Heart right ventricle (tissue), 16 donors: ENCODE measurements at regions of chr7 and their contacts with region 1.

Region 1: DNA sequence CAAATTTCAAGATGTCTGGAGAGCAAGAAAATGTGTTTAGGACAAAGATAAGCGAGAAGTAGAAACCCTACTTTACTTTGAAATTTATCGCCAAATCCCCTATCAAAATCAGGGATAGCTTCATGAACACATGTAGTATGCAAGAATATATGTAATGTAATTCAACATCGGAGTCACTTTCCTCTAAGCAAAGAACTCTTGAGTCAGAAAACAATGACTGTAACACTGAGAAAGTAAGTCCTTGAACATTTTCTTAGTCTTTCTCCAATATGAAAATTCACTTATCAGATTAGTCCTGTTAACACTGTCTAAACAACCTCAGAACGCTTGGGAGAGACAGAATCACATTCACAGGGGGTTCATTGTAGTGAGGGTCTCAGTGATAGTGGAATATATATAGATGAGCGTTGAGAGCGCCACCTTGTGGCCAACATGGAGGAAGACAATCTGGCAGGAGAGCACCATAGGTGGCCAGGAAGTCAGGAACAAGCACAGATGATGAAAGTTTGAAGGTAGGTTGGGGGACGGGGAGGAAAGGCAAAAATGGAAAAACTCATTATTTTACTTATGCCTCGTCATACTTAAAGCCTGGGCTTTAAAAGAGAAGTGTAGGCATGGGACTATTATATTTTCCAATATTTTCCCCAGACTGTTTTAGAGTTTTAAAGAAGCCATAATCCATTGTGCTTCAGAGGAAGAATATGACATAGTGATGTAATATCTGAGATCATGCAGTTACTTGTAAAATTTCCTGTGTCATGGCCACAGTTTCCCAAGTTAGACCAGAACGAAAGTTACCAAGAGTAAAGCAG is 115.5 kb upstream of the GNAI1 start:
- DNase-seq: peak in 1 of 2 donors; percentile 5
- ATAC-seq: peak in 4 of 8 donors; percentile 50 to 60 (median 56)
- H3K4me3 ChIP-seq: no peak overlapping the region
- H3K27ac ChIP-seq: no peak overlapping the region
- H3K4me1 ChIP-seq: no peaks in the 10 kb centered on the region
- H3K27me3 ChIP-seq: peaks cover 0 to 8% (median 0%) of the 10 kb centered on the region in 7 donors
- CTCF ChIP-seq: peak; percentile 66 to 85 (median 79)

Region 2: DNA sequence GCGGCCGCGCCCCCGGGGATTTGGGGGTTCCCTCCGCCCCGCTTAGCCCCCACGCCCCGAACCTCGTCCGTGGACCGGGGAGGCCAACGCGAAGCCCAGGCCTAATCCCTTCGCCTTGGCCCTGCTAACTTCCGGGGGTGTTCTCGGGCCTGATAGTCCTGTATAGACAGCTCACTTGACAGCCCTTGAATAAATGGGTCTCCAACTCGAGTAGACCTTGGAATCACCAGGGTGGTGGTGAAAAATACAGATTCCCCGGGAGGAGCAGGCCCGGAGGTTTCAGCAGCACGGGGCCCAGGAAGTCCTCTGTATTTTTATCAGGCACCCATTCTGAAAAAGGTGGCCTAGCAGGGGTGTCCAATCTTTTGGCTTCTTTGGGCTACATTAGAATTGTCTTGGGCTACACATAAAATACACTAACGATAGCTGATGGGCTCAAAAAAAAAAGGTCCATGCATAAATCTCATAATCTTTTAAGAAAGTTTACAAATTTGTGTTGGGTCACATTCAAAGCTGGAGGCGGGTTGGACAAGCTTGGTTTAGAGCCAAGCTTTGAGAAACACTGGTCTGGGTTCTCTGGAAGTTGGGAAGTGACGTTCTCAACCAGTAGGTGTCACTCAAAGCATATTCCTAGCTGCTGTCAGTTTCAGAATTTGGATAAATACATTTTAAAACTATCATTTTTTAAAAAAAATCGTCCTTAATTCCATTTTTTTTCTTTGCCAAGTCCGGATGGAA is 1998.8 kb before region 1 on chr7:
- intact Hi-C with region 1: loop called in 1 of 10 experiments (anchors 5 kb)
- DNase-seq: peak in 1 of 2 donors; percentile 82
- ATAC-seq: peak; percentile 73 to 88 (median 81)
- H3K4me3 ChIP-seq: peak overlapping the region; percentile 22 to 66 (median 60)
- H3K27ac ChIP-seq: peak overlapping the region; percentile 93 to 98 (median 96)
- H3K4me1 ChIP-seq: peaks cover 0 to 48% (median 24%) of the 10 kb centered on the region in 9 donors
- H3K27me3 ChIP-seq: peaks cover 0 to 17% (median 0%) of the 10 kb centered on the region in 7 donors
- CTCF ChIP-seq: peak; percentile 66 to 92 (median 80)

Region 3: GRCh38 chr7:79272066-79272669 is 747.0 kb before region 1 on chr7:
- intact Hi-C with region 1: loop called in 4 of 10 experiments (anchors 10 kb)
- DNase-seq: no peak
- ATAC-seq: no peak
- H3K4me3 ChIP-seq: no peak overlapping the region
- H3K27ac ChIP-seq: no peak overlapping the region
- H3K4me1 ChIP-seq: no peaks in the 10 kb centered on the region
- H3K27me3 ChIP-seq: no peaks in the 10 kb centered on the region
- CTCF ChIP-seq: peak; percentile 25 to 77 (median 62)

Region 4: DNA sequence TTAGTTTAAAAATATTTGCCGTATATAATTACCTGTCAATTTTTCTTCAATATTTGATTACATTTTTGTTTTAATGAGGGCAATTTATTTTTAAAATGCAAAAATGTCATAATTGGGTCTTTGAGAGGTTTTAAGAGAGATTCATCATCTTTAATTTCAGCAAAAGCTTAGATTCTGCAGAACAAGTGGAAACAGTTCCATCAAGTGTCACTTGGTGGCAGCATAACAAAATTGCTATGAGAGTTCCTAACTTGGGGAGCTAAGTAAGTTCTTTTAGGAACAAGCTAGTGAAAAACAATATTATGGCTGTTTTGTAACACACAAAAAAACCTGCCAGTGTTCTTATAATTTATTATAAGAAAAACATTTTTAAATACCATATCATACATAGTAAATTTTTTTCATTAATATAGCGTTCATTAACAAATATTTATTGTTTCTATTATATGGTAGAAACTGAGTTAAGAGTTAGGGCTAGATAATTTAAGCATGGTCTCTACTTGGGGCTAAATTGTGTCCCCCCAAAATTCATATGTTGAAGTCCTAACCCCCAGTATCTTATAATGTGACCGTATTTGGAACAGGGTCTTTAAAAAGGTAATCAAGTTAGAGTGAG is 720.9 kb before region 1 on chr7:
- intact Hi-C with region 1: loop called in 4 of 10 experiments (anchors 5 to 10 kb)
- DNase-seq: peak in 1 of 2 donors; percentile 11
- ATAC-seq: no peak
- H3K4me3 ChIP-seq: no peak overlapping the region
- H3K27ac ChIP-seq: no peak overlapping the region
- H3K4me1 ChIP-seq: no peaks in the 10 kb centered on the region
- H3K27me3 ChIP-seq: no peaks in the 10 kb centered on the region
- CTCF ChIP-seq: peak; percentile 30 to 85 (median 72)

Region 5: DNA sequence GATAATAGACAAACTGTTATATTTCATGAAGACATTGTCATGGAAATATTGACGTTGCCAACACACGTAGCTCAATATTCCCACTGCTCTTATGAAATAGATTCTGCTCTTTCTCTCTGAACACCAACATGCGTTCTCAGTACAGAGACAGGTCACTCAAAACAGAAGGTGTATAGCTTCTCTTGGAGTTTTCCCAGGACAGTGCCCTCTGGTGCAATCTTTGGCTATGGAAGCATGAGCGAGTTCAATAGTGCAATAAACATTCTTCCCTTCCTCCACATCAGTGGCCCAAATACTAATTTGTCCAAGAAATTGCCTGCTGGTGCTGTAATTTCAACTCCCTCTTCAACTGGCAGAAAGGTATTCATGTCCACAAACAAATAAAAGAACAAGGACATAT is 711.0 kb before region 1 on chr7:
- intact Hi-C with region 1: loop called in 2 of 10 experiments (anchors 10 kb)
- DNase-seq: no peak
- ATAC-seq: peak in 4 of 8 donors; percentile 53 to 89 (median 72)
- H3K4me3 ChIP-seq: no peak overlapping the region
- H3K27ac ChIP-seq: no peak overlapping the region
- H3K4me1 ChIP-seq: peaks cover 0 to 3% (median 0%) of the 10 kb centered on the region in 9 donors
- H3K27me3 ChIP-seq: no peaks in the 10 kb centered on the region
- CTCF ChIP-seq: peak in 3 of 9 donors; percentile 7 to 37 (median 21)